PC-3 (cell line): ENCODE measurements at regions of chr20 and their contacts with region 1.

Region 1: DNA sequence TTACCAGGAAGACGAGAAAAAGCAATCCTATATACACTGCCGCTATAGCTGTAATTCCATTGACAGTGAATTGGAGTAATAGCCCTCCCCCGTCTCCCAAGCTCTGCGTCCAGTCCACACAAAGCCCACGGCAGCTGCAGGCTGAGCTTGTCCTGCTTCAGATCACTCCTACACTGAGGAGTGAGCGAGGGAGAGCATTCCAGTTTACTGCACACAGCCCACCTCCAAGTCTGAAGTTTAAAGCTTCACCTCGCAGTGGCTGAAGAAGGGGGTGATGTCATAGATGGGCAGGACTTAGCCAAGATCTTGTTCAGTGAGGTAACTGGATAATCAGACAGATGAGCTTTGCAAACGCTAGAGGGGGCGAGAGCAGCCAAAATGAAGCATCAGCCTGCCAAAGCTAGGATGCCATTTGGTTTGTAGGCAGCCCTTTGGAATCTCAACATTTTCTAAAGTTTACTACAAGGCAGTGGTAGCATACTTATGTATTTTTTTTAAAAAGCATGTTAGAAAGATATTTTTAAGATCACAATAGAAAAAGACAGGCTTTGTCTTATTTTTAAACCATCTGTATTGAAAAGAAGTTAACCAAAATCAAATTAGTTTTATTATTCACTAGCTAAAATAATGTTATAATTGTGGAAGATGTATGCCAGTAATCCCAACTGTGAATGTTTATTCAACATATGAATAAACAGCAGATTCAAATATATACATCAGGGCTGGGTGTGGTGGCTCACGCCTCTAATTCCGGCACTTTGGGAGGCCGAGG is at the start of gene FLRT3:
- DNase-seq: peak; percentile 97
- ATAC-seq: peak; percentile 94
- H3K4me3 ChIP-seq: peak within 1 kb of the TSS; percentile 75
- H3K27ac ChIP-seq: peak within 1 kb of the TSS; percentile 44
- H3K4me1 ChIP-seq: peaks cover 15% of the 10 kb centered on the region
- H3K27me3 ChIP-seq: no peaks in the 10 kb centered on the region
- CTCF ChIP-seq: peak; percentile 96
- total RNA-seq, gene FLRT3: 2.6 and 2.8 TPM in 2 replicates

Region 2: GRCh38 chr20:14189794-14190402 is 147.7 kb before region 1 on chr20:
- CTCF ChIA-PET with region 1: no interaction called
- POLR2A ChIA-PET with region 1: interaction called, 3 read pairs
- intact Hi-C with region 1: loop called (anchors 2 kb)
- DNase-seq: peak; percentile 74
- ATAC-seq: peak; percentile 86
- H3K4me3 ChIP-seq: no peak overlapping the region
- H3K27ac ChIP-seq: no peak overlapping the region
- H3K4me1 ChIP-seq: 0 out of 2 replicates have a peak, but pooled peaks cover 7% of the 10 kb centered on the region
- H3K27me3 ChIP-seq: no peaks in the 10 kb centered on the region
- CTCF ChIP-seq: peak; percentile 93

Region 3: GRCh38 chr20:14488756-14489479 is 151.3 kb after region 1 on chr20:
- CTCF ChIA-PET with region 1: interaction called, 4 read pairs
- POLR2A ChIA-PET with region 1: no interaction called
- intact Hi-C with region 1: loop called (anchors 2 kb)
- DNase-seq: peak; percentile 53
- ATAC-seq: peak; percentile 73
- H3K4me3 ChIP-seq: no peak overlapping the region
- H3K27ac ChIP-seq: peak overlapping the region; percentile 14
- H3K4me1 ChIP-seq: peaks cover 12% of the 10 kb centered on the region
- H3K27me3 ChIP-seq: no peaks in the 10 kb centered on the region
- CTCF ChIP-seq: no peak

Region 4: GRCh38 chr20:14707865-14708601 is 370.4 kb after region 1 on chr20:
- CTCF ChIA-PET with region 1: interaction called, 12 read pairs
- POLR2A ChIA-PET with region 1: no interaction called
- intact Hi-C with region 1: loop called (anchors 2 kb)
- DNase-seq: no peak
- ATAC-seq: no peak
- H3K4me3 ChIP-seq: no peak overlapping the region
- H3K27ac ChIP-seq: no peak overlapping the region; the same call in 1 of the 2 replicates
- H3K4me1 ChIP-seq: peaks cover 47% of the 10 kb centered on the region
- H3K27me3 ChIP-seq: no peaks in the 10 kb centered on the region
- CTCF ChIP-seq: no peak

Region 5: DNA sequence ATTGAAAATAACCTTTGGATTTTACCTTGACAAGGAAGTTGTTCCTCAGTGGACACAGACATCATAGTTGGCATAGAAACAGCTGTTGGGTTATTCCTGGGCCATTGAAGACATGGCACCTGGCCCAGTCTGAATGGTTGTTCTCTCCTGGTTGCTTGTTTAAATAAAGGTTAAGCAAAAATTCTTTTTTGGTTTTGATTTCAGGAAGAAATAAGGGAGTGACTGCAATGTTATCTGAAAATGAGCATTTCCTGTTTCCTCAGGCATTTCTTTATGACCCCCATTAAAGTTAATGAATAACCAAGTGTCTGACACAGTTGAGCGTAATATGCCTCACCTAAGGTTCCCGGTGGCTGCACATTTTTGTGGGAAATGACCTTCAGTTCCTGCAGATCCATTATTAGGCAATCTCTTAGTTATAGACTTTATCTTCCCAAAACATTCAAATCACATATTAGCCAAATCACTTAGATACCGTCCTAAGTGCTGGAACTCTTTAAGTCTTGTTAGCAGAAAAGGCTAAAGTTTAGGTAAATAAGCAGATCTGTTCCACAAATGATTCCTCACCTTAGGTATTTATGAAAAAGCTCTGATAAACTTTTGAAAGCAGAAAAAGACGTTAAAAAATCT is 648.6 kb after region 1 on chr20:
- CTCF ChIA-PET with region 1: interaction called, 3 read pairs
- POLR2A ChIA-PET with region 1: no interaction called
- intact Hi-C with region 1: loop called (anchors 2 kb)
- DNase-seq: peak; percentile 96
- ATAC-seq: peak; percentile 80
- H3K4me3 ChIP-seq: no peak overlapping the region
- H3K27ac ChIP-seq: peak overlapping the region; percentile 91
- H3K4me1 ChIP-seq: peaks cover 33% of the 10 kb centered on the region
- H3K27me3 ChIP-seq: no peaks in the 10 kb centered on the region
- CTCF ChIP-seq: no peak